Posterior cingulate gyrus (tissue), 11 donors: ENCODE measurements at regions of chr10 and their contacts with region 1.

Region 1: DNA sequence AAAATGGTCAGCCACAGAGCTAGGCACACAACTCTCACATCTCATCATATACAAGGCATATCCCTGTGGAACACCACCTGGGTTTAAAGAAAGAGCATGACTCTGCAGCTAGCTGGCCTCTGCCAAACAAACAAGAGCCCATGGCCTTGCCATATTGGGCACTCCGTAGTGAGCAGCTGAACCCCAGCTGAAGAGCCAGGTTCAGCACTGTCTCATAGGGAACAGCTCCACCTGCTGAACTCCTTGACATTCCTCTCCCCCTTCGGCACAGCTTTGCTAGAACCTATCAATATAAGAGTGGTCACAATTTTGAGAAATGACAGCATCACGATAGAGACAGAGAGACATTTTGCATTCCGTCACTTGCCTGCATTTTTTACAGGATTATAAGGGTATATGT is 20.0 kb downstream of the SORCS1 start:
- DNase-seq: no peak

Region 2: DNA sequence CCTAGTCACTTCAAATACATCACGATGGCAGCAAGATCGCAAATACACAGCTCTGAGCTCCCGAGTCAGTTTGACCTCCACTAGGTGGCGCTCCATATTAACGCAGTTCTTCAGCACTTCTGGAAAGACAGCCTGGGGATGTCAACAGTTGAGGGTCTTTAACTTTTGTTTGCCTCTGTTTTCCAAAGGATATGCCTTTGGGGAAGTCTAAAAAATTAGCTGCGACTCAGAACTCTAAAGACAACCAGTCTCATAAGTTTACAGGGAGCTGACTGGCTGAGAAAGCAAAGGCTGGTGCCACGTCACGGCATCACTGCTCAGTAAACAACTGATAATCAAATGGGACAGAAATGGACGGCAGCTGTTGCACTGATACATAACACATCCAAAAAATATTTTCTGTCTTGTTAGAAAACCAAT is 438.8 kb before region 1 on chr10:
- intact Hi-C with region 1: loop called (anchors 10 kb)
- DNase-seq: peak in 9 of 10 donors; percentile 44 to 92 (median 75)